Activated CD4-positive, alpha-beta memory T cell treated with anti-CD3 and anti-CD28 coated beads, Interleukin-2, amount 10 ng/mL, durations not matched to agents 7 days and 5 days (primary cell): ENCODE measurements at regions of chr13 and their contacts with region 1.

Region 1: DNA sequence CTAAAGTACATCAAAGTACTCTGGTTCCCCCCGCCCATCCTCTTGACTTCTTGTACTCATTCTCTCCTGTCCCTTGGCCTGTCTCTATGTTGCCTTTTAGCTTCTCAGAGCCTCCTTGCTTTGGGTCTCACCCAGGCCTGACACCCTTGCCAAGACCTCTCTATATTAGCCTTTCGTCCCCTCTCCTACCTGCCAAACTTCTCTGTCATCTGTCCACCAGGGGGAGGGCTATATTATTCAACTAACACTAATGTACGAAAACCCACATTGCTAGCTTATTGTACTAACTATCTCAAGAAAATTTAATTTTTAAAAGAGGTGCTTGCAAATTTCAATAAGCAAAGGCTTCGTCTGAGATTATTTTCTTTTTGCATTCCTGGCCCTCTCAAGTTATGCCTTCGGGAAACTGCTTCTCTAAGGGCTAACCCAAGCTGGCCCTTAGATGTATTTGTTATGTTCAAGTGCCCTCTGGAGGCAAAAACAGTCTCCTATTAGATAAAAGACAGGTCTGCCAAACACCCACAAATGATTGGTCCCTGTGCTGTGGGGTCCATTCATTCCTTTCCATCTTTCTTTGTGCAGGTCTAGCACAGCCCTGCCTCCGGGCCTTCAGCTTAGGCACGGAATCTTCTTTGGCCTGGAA is 6.3 kb upstream of the MRPS31 start:
- DNase-seq: peak; percentile 56
- H3K4me3 Mint-ChIP-seq: peak overlapping the region; percentile 66
- H3K27ac Mint-ChIP-seq: peak overlapping the region; percentile 99
- H3K4me1 Mint-ChIP-seq: peaks cover 38% of the 10 kb centered on the region
- H3K27me3 Mint-ChIP-seq: no peaks in the 10 kb centered on the region

Region 2: GRCh38 chr13:39942552-39943273 is 834.6 kb before region 1 on chr13:
- CTCF ChIA-PET with region 1: interaction called, 13 read pairs
- POLR2A ChIA-PET with region 1: no interaction called
- DNase-seq: peak; percentile 69
- H3K4me3 Mint-ChIP-seq: no peak overlapping the region
- H3K27ac Mint-ChIP-seq: no peak overlapping the region
- H3K4me1 Mint-ChIP-seq: peaks cover 3% of the 10 kb centered on the region
- H3K27me3 Mint-ChIP-seq: no peaks in the 10 kb centered on the region

Region 3: DNA sequence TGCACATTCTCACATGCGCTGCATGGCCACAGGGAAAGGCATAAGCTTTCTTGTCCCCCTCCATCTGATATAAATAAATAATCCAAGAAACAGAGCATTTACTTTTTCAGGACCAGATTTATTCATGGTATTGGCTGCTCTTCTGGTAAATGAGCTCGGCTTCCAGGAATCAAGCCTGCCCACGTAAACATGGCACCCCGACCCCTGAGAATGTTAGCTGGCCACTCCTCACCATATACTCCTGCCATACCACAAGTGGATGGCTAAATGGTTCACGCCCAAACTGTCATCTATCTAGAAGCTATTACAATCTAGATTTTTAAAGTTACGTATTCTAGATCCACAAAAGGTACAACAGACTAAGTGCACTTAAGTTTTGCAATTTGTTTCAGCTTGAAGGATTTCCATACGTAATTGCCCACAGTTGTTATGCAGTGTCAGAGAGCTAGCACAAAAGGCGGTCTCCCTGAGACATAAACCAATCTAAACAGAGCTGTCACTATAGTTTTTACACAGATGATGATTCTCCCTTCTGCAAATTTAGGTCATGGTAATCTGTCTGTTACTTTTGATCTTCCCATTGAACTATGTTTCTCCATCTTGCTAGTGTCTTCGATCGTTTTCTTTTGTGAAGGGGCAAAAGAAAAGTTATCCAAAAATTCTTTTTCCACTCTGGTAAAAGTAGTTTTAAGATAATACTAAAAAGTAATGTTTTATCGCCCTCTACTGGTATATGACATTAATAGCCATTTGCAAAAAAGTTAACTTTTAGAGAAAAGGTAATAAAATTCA is 94.6 kb before region 1 on chr13:
- CTCF ChIA-PET with region 1: interaction called, 29 read pairs
- POLR2A ChIA-PET with region 1: no interaction called
- DNase-seq: no peak
- H3K4me3 Mint-ChIP-seq: no peak overlapping the region
- H3K27ac Mint-ChIP-seq: no peak overlapping the region
- H3K4me1 Mint-ChIP-seq: peaks cover 6% of the 10 kb centered on the region
- H3K27me3 Mint-ChIP-seq: no peaks in the 10 kb centered on the region

Region 4: GRCh38 chr13:40789275-40790133 is 12.2 kb after region 1 on chr13 and contains the start of gene SLC25A15:
- CTCF ChIA-PET with region 1: interaction called, 29 read pairs
- POLR2A ChIA-PET with region 1: interaction called, 26 read pairs
- DNase-seq: peak; percentile 76
- H3K4me3 Mint-ChIP-seq: peak within 1 kb of the TSS; percentile 75
- H3K27ac Mint-ChIP-seq: peak within 1 kb of the TSS; percentile 68
- H3K4me1 Mint-ChIP-seq: peaks cover 36% of the 10 kb centered on the region
- H3K27me3 Mint-ChIP-seq: no peaks in the 10 kb centered on the region
- total RNA-seq, gene SLC25A15: 8.2 to 9.8 TPM

Region 5: DNA sequence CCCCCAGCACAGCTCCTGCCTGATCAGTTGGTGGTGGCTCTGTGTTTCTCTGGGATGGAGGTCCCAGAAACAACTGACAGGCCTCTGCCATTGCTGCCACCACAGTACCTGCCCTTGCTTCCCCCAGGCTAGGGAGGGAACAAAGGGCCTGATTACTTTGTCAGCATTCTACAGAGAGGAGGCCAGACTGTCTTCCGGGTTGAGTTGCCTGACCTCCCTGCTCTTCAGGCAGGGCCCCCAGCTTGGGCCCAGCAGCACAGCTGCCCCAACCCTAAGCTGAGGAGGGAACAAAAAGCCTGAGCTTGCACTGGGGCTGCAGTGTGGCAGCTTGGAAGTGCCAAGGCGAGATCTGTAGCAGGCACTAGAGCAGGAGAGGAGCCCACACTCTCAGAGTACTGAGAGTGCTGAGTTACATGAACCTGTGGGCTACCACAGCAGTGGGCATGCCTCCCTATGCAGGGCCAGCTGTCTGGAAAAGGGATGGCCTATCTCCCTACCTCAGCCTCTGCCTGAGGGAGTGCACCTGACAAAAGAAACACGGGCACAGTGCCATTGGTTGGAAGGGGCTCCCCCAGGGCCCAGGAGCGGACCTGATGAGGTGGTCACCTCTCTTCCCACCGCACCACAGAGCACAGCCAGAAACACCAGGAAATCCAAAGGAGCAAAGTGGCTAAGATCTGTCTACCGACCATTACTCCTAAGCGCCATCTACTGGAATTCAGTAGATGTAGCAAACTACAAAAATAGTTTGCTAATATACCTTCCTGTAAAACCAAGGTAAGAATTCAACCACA is 36.6 kb after region 1 on chr13:
- CTCF ChIA-PET with region 1: interaction called, 19 read pairs
- POLR2A ChIA-PET with region 1: no interaction called
- DNase-seq: no peak
- H3K4me3 Mint-ChIP-seq: no peak overlapping the region
- H3K27ac Mint-ChIP-seq: peak overlapping the region; percentile 30
- H3K4me1 Mint-ChIP-seq: peaks cover 1% of the 10 kb centered on the region
- H3K27me3 Mint-ChIP-seq: no peaks in the 10 kb centered on the region

Region 6: DNA sequence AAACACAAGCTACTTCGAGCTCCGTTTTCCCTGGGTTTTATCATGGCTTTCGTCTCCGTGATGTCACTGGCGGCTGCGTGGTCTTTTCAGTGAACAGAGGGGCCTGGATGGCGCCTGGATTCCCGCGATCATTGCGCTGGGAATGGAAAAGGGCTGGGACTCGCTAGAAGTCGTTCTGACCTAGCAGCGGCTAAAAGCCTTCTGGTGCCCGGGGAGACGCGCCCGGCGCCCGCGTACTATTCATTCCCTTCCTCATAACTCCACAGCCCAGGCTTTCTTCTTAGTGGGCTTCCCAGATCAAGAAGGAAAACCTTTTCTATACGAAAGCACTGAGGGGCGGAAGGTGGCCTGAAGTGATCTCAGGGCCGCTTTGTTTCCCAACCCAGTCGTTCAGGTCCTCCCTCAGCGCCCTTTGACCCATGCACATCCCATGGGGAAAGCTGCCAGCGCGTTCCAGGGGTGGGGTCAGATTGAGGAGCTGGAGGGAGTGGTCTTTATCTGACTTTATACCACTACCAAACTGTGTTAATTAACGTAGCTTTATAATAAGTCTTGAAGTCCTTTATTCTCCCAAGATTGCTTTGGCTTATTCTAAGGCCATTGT is 145.3 kb after region 1 on chr13:
- CTCF ChIA-PET with region 1: interaction called, 12 read pairs
- POLR2A ChIA-PET with region 1: interaction called, 13 read pairs
- DNase-seq: no peak
- H3K4me3 Mint-ChIP-seq: peak overlapping the region; percentile 41
- H3K27ac Mint-ChIP-seq: peak overlapping the region; percentile 53
- H3K4me1 Mint-ChIP-seq: peaks cover 19% of the 10 kb centered on the region
- H3K27me3 Mint-ChIP-seq: no peaks in the 10 kb centered on the region

Region 7: GRCh38 chr13:40974460-40975407 is 197.4 kb after region 1 on chr13:
- CTCF ChIA-PET with region 1: no interaction called
- POLR2A ChIA-PET with region 1: no interaction called
- DNase-seq: peak; percentile 36
- H3K4me3 Mint-ChIP-seq: peak overlapping the region; percentile 19
- H3K27ac Mint-ChIP-seq: peak overlapping the region; percentile 47
- H3K4me1 Mint-ChIP-seq: peaks cover 84% of the 10 kb centered on the region
- H3K27me3 Mint-ChIP-seq: no peaks in the 10 kb centered on the region